ENCODE measurements at regions of chr13 and their contacts with region 1.

Region 1: GRCh38 chr13:48562296-48563066 is 29.6 kb upstream of the RCBTB2 start:
- DNase-seq: peak; percentile 76
- ATAC-seq: peak; percentile 98
- H3K4me3 Mint-ChIP-seq: no peak overlapping the region
- H3K27ac Mint-ChIP-seq: no peak overlapping the region
- H3K4me1 Mint-ChIP-seq: peaks cover 30% of the 10 kb centered on the region
- H3K27me3 Mint-ChIP-seq: peaks cover 58% of the 10 kb centered on the region

Region 2: DNA sequence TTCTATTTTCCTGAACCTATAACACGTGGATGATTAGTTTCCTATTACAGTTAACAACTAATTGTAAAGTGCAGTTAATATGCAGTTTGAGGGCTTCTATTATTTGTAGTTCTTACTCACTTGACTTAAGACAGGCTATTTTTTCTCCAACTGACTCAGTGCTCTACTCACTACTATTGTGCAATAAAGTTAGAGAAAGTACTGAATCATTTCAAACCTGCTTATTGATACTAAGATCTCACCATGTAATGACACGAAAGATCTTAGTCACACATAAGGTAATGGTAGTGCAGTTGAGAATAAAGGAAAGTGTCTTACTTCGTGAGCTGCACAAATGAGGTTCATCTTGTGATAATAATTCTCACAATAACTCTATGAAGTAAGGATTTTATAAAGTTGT is 352.3 kb before region 1 on chr13:
- CTCF ChIA-PET with region 1: no interaction called
- POLR2A ChIA-PET with region 1: no interaction called
- intact Hi-C with region 1: loop called in 1 of 2 experiments (anchors 1 kb)
- DNase-seq: no peak
- ATAC-seq: peak; percentile 96
- H3K4me3 Mint-ChIP-seq: no peak overlapping the region
- H3K27ac Mint-ChIP-seq: no peak overlapping the region
- H3K4me1 Mint-ChIP-seq: peaks cover 24% of the 10 kb centered on the region
- H3K27me3 Mint-ChIP-seq: peaks cover 13% of the 10 kb centered on the region

Region 3: DNA sequence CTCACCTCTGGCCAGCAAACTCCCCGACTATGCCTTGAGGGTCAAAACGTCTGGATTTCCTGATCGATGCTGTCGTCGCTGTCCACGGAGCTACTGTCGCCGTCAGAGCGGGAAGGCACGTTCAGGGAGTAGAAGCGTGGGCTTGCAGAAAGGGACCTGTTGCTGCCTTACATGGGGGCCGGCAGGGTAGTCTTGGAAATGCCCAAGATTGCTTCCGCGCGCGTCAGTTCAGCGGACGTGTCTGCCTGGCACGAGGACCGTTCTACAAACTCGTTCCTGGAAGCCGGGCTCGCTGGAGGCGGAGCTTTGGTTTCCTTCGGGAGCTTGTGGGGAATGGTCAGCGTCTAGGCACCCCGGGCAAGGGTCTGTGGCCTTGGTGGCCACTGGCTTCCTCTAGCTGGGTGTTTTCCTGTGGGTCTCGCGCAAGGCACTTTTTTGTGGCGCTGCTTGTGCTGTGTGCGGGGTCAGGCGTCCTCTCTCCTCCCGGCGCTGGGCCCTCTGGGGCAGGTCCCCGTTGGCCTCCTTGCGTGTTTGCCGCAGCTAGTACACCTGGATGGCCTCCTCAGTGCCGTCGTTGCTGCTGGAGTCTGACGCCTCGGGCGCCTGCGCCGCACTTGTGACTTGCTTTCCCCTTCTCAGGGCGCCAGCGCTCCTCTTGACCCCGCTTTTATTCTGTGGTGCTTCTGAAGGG is 243.5 kb before region 1 on chr13:
- CTCF ChIA-PET with region 1: no interaction called
- POLR2A ChIA-PET with region 1: no interaction called
- intact Hi-C with region 1: loop called in 1 of 2 experiments (anchors 5 kb)
- DNase-seq: peak; percentile 53
- ATAC-seq: peak; percentile 50
- H3K4me3 Mint-ChIP-seq: peak overlapping the region; percentile 69
- H3K27ac Mint-ChIP-seq: peak overlapping the region; percentile 56
- H3K4me1 Mint-ChIP-seq: peaks cover 23% of the 10 kb centered on the region
- H3K27me3 Mint-ChIP-seq: peaks cover 3% of the 10 kb centered on the region

Region 4: DNA sequence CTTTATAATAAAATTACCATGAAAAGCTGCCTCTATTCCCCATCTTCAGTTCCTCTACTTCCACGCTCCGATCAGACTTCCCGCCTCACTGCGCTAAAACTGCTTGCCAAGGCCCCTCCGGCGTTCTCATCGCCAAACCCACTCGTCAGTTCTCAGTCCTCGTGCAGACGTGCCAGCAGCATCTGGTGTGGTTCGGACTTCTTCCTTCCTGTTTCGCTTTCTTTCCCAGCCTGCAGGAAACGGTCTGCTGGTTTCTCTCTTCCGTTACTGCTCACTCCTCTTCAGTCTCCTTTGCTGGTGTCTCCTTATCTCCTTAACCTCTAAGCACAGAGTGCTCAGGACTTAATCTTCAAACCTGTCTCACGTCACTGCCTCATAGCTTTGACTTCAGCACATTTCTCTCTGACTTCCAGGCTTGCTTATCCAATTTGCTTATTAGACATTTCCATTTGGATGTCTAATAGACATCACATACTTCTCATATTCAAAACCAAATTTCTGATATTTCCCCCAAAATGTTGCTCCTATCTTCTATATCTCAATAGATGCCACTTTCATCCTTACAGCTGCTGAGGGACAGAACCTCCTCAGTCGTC is 69.9 kb before region 1 on chr13:
- CTCF ChIA-PET with region 1: no interaction called
- POLR2A ChIA-PET with region 1: no interaction called
- intact Hi-C with region 1: loop called in 1 of 2 experiments (anchors 5 kb)
- DNase-seq: peak; percentile 77
- ATAC-seq: peak; percentile 80
- H3K4me3 Mint-ChIP-seq: no peak overlapping the region
- H3K27ac Mint-ChIP-seq: no peak overlapping the region
- H3K4me1 Mint-ChIP-seq: peaks cover 18% of the 10 kb centered on the region
- H3K27me3 Mint-ChIP-seq: no peaks in the 10 kb centered on the region

Region 5: GRCh38 chr13:48505597-48506091 is 56.8 kb before region 1 on chr13:
- CTCF ChIA-PET with region 1: interaction called, 4 read pairs
- POLR2A ChIA-PET with region 1: no interaction called
- intact Hi-C with region 1: loop called (anchors 1 to 5 kb)
- DNase-seq: peak; percentile 64
- ATAC-seq: peak; percentile 71
- H3K4me3 Mint-ChIP-seq: peak overlapping the region; percentile 22
- H3K27ac Mint-ChIP-seq: peak overlapping the region; percentile 85
- H3K4me1 Mint-ChIP-seq: peaks cover 57% of the 10 kb centered on the region
- H3K27me3 Mint-ChIP-seq: no peaks in the 10 kb centered on the region

Region 6: GRCh38 chr13:48580185-48580803 is 17.8 kb after region 1 on chr13:
- CTCF ChIA-PET with region 1: interaction called, 32 read pairs
- POLR2A ChIA-PET with region 1: no interaction called
- intact Hi-C with region 1: loop called in 1 of 2 experiments (anchors 2 kb)
- DNase-seq: peak; percentile 81
- ATAC-seq: no peak
- H3K4me3 Mint-ChIP-seq: no peak overlapping the region
- H3K27ac Mint-ChIP-seq: no peak overlapping the region
- H3K4me1 Mint-ChIP-seq: no peaks in the 10 kb centered on the region
- H3K27me3 Mint-ChIP-seq: peaks cover 16% of the 10 kb centered on the region

Region 7: GRCh38 chr13:48667167-48667566 is 104.7 kb after region 1 on chr13:
- CTCF ChIA-PET with region 1: no interaction called
- POLR2A ChIA-PET with region 1: no interaction called
- intact Hi-C with region 1: no loop called
- DNase-seq: no peak
- ATAC-seq: no peak
- H3K4me3 Mint-ChIP-seq: no peak overlapping the region
- H3K27ac Mint-ChIP-seq: no peak overlapping the region
- H3K4me1 Mint-ChIP-seq: no peaks in the 10 kb centered on the region
- H3K27me3 Mint-ChIP-seq: no peaks in the 10 kb centered on the region